ENCODE measurements at regions of chr4 and their contacts with region 1.

Region 1: DNA sequence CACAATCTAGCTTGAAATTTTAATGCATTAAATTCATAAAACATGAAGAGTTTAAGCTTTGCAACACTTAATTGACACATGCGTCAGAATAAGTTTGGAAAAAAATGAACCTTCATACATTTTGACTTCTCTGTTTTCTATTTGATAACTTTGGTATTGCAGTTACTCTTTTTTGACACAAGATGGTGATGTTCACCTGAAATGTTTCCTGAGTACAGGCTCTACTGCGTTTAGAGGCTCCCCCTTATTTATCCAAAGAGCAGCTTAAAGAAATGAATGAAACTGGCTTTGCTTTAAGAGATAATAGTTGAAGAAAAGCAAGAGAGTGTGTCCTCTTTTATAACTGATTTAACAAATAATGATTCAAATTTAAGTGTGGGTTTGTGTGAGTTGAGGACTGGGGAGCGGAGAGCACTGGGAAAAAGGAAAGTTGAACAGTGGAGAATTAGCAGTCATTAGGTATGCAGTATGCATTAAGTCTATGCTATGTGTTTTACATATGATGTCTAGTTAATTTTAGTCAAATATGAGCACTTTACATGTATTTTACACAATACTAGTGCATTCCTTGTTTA is 180.6 kb upstream of the NUDT6 start:
- DNase-seq: peak in 1 of 2 experiments; percentile 34
- H3K4me3 ChIP-seq: no peak overlapping the region
- H3K4me3 Mint-ChIP-seq: no peak overlapping the region
- H3K27ac Mint-ChIP-seq: peak overlapping the region; percentile 3
- H3K4me1 ChIP-seq: peaks cover 3% of the 10 kb centered on the region; the same call in 1 of the 2 replicates
- H3K4me1 Mint-ChIP-seq: peaks cover 9% of the 10 kb centered on the region
- H3K27me3 ChIP-seq: no peaks in the 10 kb centered on the region
- H3K27me3 Mint-ChIP-seq: no peaks in the 10 kb centered on the region
- CTCF ChIP-seq: peak; percentile 46 to 57

Region 2: GRCh38 chr4:122803788-122804208 is 299.2 kb before region 1 on chr4:
- CTCF ChIA-PET with region 1: no interaction called
- POLR2A ChIA-PET with region 1: no interaction called
- intact Hi-C with region 1: no loop called
- DNase-seq: no peak
- H3K4me3 ChIP-seq: no peak overlapping the region
- H3K4me3 Mint-ChIP-seq: no peak overlapping the region
- H3K27ac Mint-ChIP-seq: no peak overlapping the region
- H3K4me1 ChIP-seq: no peaks in the 10 kb centered on the region
- H3K4me1 Mint-ChIP-seq: no peaks in the 10 kb centered on the region
- H3K27me3 ChIP-seq: no peaks in the 10 kb centered on the region
- H3K27me3 Mint-ChIP-seq: no peaks in the 10 kb centered on the region
- CTCF ChIP-seq: no peak

Region 3: GRCh38 chr4:123564758-123565346 is 461.9 kb after region 1 on chr4:
- CTCF ChIA-PET with region 1: interaction called, 3 read pairs
- POLR2A ChIA-PET with region 1: no interaction called
- intact Hi-C with region 1: loop called (anchors 1 kb)
- DNase-seq: peak; percentile 80 to 81
- H3K4me3 ChIP-seq: no peak overlapping the region
- H3K4me3 Mint-ChIP-seq: no peak overlapping the region
- H3K27ac Mint-ChIP-seq: no peak overlapping the region
- H3K4me1 ChIP-seq: peaks cover 20% of the 10 kb centered on the region
- H3K4me1 Mint-ChIP-seq: peaks cover 22% of the 10 kb centered on the region
- H3K27me3 ChIP-seq: no peaks in the 10 kb centered on the region
- H3K27me3 Mint-ChIP-seq: no peaks in the 10 kb centered on the region
- CTCF ChIP-seq: peak; percentile 88 to 99

Region 4: GRCh38 chr4:124018383-124019317 is 915.7 kb after region 1 on chr4:
- CTCF ChIA-PET with region 1: no interaction called
- POLR2A ChIA-PET with region 1: no interaction called
- intact Hi-C with region 1: loop called (anchors 10 kb)
- DNase-seq: peak; percentile 69 to 82
- H3K4me3 ChIP-seq: no peak overlapping the region
- H3K4me3 Mint-ChIP-seq: peak overlapping the region; percentile 22
- H3K27ac Mint-ChIP-seq: peak overlapping the region; percentile 88
- H3K4me1 ChIP-seq: peaks cover 18% of the 10 kb centered on the region
- H3K4me1 Mint-ChIP-seq: peaks cover 25% of the 10 kb centered on the region
- H3K27me3 ChIP-seq: no peaks in the 10 kb centered on the region
- H3K27me3 Mint-ChIP-seq: no peaks in the 10 kb centered on the region
- CTCF ChIP-seq: no peak

Measured in Caco-2 (cell line).